Activated CD8-positive, alpha-beta T cell treated with anti-CD3 and anti-CD28 coated beads for 36 hours (primary cell): ENCODE measurements at regions of chr12 and their contacts with region 1.

Region 1: DNA sequence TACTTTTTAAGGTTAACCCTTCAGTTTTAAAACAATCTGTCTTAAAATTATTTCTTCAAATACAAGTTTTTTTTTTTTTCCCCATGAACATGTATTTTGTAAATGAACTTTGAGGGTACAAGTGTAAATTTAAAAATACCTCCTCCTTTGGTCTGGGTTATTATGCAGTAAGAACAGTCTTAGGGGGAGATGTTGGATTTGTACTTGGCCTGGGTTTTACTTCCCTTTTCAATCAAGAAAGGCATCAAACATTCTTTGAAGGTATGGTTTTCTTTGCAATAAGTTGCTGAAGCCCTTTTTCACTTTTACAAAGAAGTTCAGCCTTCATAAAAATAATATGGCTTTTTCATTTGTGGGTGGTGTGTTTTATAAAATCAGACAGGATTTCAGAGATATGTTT is 20.5 kb downstream of the WBP11 start:
- DNase-seq: no peak
- ATAC-seq: no peak
- H3K4me3 Mint-ChIP-seq: no peak overlapping the region
- H3K27ac Mint-ChIP-seq: no peak overlapping the region
- H3K4me1 Mint-ChIP-seq: peaks cover 10% of the 10 kb centered on the region
- H3K27me3 Mint-ChIP-seq: no peaks in the 10 kb centered on the region
- CTCF ChIP-seq: no peak

Region 2: DNA sequence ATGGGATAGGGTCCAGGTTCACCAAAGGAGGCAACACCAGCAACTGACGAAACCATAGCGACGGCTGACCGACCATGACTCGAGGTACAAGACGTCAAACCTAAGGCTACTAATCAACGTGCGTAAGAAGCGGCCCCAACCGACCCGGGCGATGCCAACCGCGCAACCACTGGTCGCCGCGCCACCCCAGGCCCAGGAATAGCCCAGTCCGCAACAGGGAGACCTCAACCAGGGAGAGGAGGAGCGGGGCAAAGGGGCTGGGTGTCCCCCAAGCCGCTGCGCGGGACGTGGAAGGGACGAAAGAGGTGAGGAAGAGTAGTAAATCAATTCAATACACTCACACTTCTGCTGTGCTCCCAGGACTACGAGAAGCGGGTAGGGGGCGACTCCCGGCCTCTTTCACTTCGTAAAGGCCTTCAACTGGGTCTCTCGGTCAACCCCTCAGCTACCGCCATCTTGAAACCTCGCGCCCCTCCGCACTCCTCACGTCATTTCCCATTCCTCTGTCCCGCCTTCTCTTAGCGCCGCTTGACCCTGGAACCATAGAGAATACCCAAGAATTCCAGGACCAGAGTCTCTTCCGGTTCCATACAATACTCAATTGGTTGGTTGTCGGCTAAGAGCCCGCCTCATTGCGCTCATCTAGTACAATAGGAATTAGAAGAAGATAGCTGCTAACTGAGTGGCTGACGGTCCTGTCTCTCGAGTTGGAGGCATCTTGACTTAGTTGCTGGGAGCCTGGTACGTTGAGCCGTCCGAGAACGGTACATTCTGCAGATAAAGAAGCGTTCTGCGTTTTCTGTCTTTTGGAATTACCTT is 20.5 kb after region 1 on chr12 and contains the starts of genes C12orf60 and WBP11:
- CTCF ChIA-PET with region 1: interaction called, 12 read pairs
- POLR2A ChIA-PET with region 1: interaction called, 5 read pairs
- intact Hi-C with region 1: no loop called
- DNase-seq: peak; percentile 94
- ATAC-seq: peak; percentile 98
- H3K4me3 Mint-ChIP-seq: no peak within 1 kb of the TSS
- H3K27ac Mint-ChIP-seq: no peak within 1 kb of the TSS
- H3K4me1 Mint-ChIP-seq: peaks cover 37% of the 10 kb centered on the region
- H3K27me3 Mint-ChIP-seq: no peaks in the 10 kb centered on the region
- CTCF ChIP-seq: no peak
- total RNA-seq, gene C12orf60: 3.3 to 4.2 TPM
- total RNA-seq, gene WBP11: 123 to 130 TPM

Region 3: GRCh38 chr12:14948672-14949071 is 165.9 kb after region 1 on chr12:
- CTCF ChIA-PET with region 1: no interaction called
- POLR2A ChIA-PET with region 1: no interaction called
- intact Hi-C with region 1: no loop called
- DNase-seq: peak; percentile 73
- ATAC-seq: peak; percentile 77
- H3K4me3 Mint-ChIP-seq: peak overlapping the region; percentile 68
- H3K27ac Mint-ChIP-seq: peak overlapping the region; percentile 97
- H3K4me1 Mint-ChIP-seq: peaks cover 84% of the 10 kb centered on the region
- H3K27me3 Mint-ChIP-seq: no peaks in the 10 kb centered on the region
- CTCF ChIP-seq: no peak